GM12878 (cell line): ENCODE measurements at regions of chr11 and their contacts with region 1.

Region 1: DNA sequence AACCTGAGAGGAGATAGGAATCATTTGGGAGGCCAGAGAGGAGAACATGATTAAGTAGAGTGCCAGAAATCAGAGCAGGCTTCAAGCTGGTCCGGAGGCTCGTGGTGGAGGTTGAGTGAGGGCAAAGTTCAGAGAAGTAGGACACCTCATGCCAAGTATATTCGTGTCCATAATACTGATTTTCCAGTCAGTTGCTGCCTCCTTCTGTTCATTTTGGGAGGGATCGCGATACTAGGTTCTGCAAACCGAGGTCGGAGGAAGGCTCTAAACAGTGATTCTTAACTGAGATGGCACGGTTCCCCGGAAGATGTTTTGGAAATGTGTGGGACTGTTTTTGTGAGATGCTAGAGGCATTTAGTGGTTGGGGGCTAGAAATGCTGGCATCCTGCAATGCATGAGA is 13.6 kb upstream of the CD3E start:
- DNase-seq: no peak
- ATAC-seq: peak; percentile 86
- H3K4me3 ChIP-seq: no peak overlapping the region
- H3K27ac ChIP-seq: no peak overlapping the region
- H3K4me1 ChIP-seq: no peaks in the 10 kb centered on the region
- H3K27me3 ChIP-seq: no peaks in the 10 kb centered on the region; a peak in 2 of 4 replicates
- CTCF ChIP-seq: peak; percentile 47 to 70 (median 49); a peak in 4 of 6 replicates
- EP300 ChIP-seq: no peak
- POLR2A ChIP-seq: no peak
- RAD21 ChIP-seq: peak; percentile 80

Region 2: GRCh38 chr11:118304568-118305248 is 13.8 kb after region 1 on chr11 and contains the start of gene CD3E:
- CTCF ChIA-PET with region 1: interaction called, 16 read pairs
- POLR2A ChIA-PET with region 1: no interaction called
- RAD21 ChIA-PET with region 1: interaction called, 4 read pairs
- SMC1A ChIA-PET with region 1: interaction called, 4 read pairs
- in situ Hi-C with region 1: no loop called
- intact Hi-C with region 1: no loop called
- DNase-seq: no peak
- ATAC-seq: no peak
- H3K4me3 ChIP-seq: no peak within 1 kb of the TSS
- H3K27ac ChIP-seq: no peak within 1 kb of the TSS
- H3K4me1 ChIP-seq: peaks cover 4% of the 10 kb centered on the region; the same call in 1 of the 2 replicates
- H3K27me3 ChIP-seq: peaks cover 0 to 2% of the 10 kb centered on the region in 2 experiments; a peak in 1 of 4 replicates
- CTCF ChIP-seq: no peak
- EP300 ChIP-seq: no peak
- POLR2A ChIP-seq: no peak; the same call in 1 of the 2 replicates
- RAD21 ChIP-seq: no peak
- polyA plus RNA-seq, gene CD3E: 1.7 to 2.4 TPM

Region 3: DNA sequence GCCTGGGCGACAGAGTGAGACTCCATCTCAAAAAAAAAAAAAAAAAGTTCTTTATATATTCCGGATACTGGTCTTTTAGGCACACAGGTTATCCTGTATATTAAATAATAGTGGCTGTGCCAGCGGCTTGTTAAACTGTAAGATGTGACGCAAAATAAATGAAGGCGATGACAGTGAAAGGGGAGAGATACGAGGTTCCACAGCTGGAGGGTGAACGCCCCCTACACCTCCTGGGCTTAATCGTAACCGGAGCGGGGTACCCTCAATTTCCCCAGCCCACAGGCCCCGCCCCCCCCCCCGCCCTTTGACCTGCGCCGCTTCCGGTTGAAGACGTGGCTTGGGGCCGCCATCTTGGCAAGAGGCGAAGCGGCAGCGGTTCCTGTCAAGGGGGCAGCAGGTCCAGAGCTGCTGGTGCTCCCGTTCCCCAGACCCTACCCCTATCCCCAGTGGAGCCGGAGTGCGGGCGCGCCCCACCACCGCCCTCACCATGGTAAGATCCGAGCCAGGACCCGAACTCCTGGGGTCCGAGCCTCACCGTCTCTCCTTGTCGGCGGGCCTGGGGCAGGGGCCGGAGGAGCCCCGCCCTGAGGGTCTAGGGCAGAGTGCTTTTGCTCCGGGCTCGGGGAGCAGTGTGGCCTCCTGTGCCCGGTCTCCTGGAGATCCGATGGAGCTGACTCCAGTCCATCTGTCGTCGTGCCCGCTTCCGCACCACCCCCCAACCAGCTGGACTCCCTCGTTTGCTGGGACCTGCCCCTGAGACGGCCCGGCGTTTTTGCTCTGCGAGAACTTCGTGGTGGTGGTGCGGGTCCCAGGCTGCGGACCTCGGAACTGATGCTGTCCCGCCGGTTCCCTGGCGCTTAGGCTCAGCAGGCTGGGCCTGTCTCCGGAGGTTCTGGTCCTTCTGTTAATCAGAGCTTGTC is 281.4 kb after region 1 on chr11 and contains the start of gene ARCN1:
- CTCF ChIA-PET with region 1: no interaction called
- POLR2A ChIA-PET with region 1: no interaction called
- RAD21 ChIA-PET with region 1: no interaction called
- SMC1A ChIA-PET with region 1: no interaction called
- in situ Hi-C with region 1: no loop called
- intact Hi-C with region 1: loop called (anchors 10 kb)
- DNase-seq: peak; percentile 24
- ATAC-seq: peak; percentile 90
- H3K4me3 ChIP-seq: peak within 1 kb of the TSS; percentile 90
- H3K27ac ChIP-seq: peak within 1 kb of the TSS; percentile 96
- H3K4me1 ChIP-seq: peaks cover 3% of the 10 kb centered on the region; the same call in 1 of the 2 replicates
- H3K27me3 ChIP-seq: no peaks in the 10 kb centered on the region
- CTCF ChIP-seq: no peak
- EP300 ChIP-seq: no peak
- POLR2A ChIP-seq: peak; percentile 96
- RAD21 ChIP-seq: no peak
- polyA plus RNA-seq, gene ARCN1: 33.3 to 47.4 TPM

Region 4: GRCh38 chr11:118592616-118593367 is 301.9 kb after region 1 on chr11:
- CTCF ChIA-PET with region 1: no interaction called
- POLR2A ChIA-PET with region 1: no interaction called
- RAD21 ChIA-PET with region 1: no interaction called
- SMC1A ChIA-PET with region 1: no interaction called
- in situ Hi-C with region 1: no loop called
- intact Hi-C with region 1: no loop called
- DNase-seq: no peak
- ATAC-seq: no peak
- H3K4me3 ChIP-seq: no peak overlapping the region
- H3K27ac ChIP-seq: no peak overlapping the region
- H3K4me1 ChIP-seq: peaks cover 9% of the 10 kb centered on the region; the same call in 1 of the 2 replicates
- H3K27me3 ChIP-seq: no peaks in the 10 kb centered on the region
- CTCF ChIP-seq: no peak
- EP300 ChIP-seq: no peak
- POLR2A ChIP-seq: no peak
- RAD21 ChIP-seq: no peak